ENCODE measurements at regions of chr13 and their contacts with region 1.

Region 1: DNA sequence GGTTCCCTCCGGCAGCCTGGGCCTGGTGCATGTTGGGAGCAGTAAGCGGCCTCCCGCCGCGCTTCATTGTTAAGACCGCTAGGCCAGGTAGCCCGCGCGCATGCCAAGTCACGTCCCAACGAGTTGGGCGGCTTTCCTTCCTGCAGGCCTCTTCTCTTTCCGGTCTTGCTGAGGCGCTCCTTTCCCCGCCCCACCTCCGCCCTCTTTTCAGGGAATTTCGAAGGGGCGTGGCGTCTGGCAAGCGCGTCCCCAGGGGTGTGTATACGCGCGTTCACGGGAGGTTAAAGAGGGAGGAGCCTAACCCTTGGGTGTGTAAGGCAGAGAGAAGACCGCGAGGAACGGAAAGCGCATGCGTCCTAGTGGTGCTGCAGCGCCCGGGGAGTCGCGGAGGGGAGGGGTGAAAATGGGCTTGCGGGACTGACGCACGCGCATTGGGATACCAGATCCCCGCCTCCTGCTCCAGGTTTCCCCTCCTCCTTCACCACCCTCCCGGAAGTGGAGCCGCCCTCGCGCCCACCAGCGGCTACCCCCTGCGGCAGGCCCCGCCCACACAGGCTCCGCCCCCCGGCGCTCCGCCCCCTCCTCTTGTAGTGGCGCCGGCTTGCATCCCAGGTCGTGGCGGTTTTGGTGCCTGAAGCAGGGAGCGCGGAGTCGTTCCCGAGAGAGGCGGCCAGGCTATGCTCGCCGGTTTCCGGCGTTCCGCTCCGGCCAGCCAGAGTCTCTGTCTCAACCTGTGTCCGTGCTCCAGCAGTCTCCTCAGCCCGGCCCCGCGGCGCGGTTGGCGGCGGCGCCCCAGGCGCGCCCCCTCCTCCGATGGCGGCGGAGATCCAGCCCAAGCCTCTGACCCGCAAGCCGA is at the start of gene WDFY2:
- DNase-seq: peak; percentile 99
- H3K4me3 ChIP-seq: peak within 1 kb of the TSS; percentile 77
- H3K27ac ChIP-seq: peak within 1 kb of the TSS; percentile 66
- H3K4me1 ChIP-seq: peaks cover 16% of the 10 kb centered on the region
- CTCF ChIP-seq: peak; percentile 43; the same call in 1 of the 2 replicates
- total RNA-seq, gene WDFY2: 6.4 and 8.2 TPM in 2 replicates

Region 2: GRCh38 chr13:51564252-51564651 is 19.9 kb before region 1 on chr13:
- CTCF ChIA-PET with region 1: no interaction called
- POLR2A ChIA-PET with region 1: no interaction called
- intact Hi-C with region 1: no loop called
- DNase-seq: no peak
- H3K4me3 ChIP-seq: no peak overlapping the region
- H3K27ac ChIP-seq: no peak overlapping the region
- H3K4me1 ChIP-seq: peaks cover 6% of the 10 kb centered on the region
- CTCF ChIP-seq: no peak

Region 3: GRCh38 chr13:51595416-51595815 is 11.3 kb after region 1 on chr13:
- CTCF ChIA-PET with region 1: no interaction called
- POLR2A ChIA-PET with region 1: interaction called, 13 read pairs
- intact Hi-C with region 1: no loop called
- DNase-seq: no peak
- H3K4me3 ChIP-seq: no peak overlapping the region
- H3K27ac ChIP-seq: no peak overlapping the region
- H3K4me1 ChIP-seq: no peaks in the 10 kb centered on the region
- CTCF ChIP-seq: no peak

Region 4: DNA sequence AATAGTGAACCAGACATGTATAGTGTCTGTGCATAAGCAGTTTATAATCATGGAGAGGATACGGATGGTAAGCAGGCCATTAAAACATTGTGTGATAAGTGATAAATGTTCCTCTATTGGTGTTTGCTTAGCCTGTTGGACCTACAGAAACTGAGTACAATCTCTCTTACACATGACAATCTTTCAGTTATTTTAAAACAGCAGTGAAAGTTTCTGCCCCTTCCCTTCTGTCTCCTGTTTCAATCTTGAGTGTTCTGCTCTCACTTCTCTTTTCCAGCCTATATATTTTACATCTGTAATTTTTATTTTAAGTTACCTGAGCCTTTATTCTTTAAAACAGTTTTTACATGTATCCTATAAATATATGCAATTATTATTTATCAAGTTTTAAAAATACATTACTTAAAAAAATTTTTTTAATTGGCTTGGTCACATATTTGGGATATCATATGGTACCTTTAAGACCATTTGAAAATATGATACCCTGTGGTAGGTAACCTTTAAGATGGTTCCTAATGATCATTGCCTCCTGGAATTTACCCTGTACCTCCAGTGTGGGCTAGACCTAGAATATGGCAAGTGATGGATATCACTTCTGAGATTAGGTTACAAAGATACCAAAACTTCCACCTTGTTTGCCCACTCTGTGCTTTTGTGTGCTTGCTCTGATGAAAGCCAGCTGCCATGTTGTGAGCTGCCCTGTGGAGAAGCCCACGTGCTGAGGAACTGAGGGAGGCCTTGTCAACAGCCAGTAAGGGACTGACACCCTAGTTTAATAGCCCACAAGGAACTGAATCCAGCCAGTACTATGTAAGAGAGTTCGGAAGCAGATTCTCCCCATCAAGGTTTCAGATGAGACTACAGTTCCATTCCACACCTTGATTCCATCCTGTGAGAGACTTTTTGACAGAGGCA is 120.6 kb after region 1 on chr13:
- CTCF ChIA-PET with region 1: interaction called, 3 read pairs
- POLR2A ChIA-PET with region 1: no interaction called
- intact Hi-C with region 1: loop called (anchors 2 kb)
- DNase-seq: peak; percentile 53
- H3K4me3 ChIP-seq: peak overlapping the region; percentile 26
- H3K27ac ChIP-seq: peak overlapping the region; percentile 68
- H3K4me1 ChIP-seq: peaks cover 27% of the 10 kb centered on the region
- CTCF ChIP-seq: no peak

Region 5: GRCh38 chr13:51797664-51798488 is 213.8 kb after region 1 on chr13:
- CTCF ChIA-PET with region 1: interaction called, 3 read pairs
- POLR2A ChIA-PET with region 1: interaction called, 3 read pairs
- intact Hi-C with region 1: loop called (anchors 1 kb)
- DNase-seq: peak; percentile 84
- H3K4me3 ChIP-seq: no peak overlapping the region
- H3K27ac ChIP-seq: no peak overlapping the region
- H3K4me1 ChIP-seq: peaks cover 88% of the 10 kb centered on the region
- CTCF ChIP-seq: peak; percentile 82

Region 6: DNA sequence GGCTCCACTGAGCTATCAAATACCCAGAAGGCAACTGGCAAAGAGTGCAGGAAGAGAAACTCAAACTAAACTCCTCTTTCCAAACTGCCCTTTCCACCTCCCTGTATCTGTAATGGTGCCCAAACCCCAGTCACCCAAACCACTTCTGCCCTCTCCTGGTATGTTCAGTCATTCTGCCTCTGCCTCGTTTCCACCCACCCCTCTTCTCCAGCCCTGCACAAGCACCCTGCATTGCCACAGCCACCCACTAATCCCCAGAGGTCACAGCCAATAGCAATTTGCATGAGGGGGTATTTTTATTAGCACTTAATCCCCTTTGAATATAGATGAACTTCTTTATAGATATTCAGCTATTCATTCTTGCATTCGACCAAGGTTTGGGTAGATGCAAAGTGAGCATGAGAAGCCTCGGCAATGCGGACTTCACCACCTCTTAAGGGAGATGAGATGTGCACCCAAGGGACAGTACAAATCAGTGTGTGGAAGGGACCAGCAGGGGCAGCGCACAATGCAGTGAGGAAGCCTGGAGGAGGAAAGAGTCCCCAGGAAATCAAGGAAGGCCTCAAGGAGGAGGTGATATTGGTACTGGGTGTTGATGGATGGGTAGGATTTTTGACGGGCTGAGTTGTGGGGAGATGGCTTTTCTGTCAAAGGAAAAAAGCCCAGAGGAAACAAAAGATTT is 248.5 kb after region 1 on chr13:
- CTCF ChIA-PET with region 1: no interaction called
- POLR2A ChIA-PET with region 1: no interaction called
- intact Hi-C with region 1: loop called (anchors 1 kb)
- DNase-seq: peak; percentile 83
- H3K4me3 ChIP-seq: peak overlapping the region; percentile 41
- H3K27ac ChIP-seq: peak overlapping the region; percentile 95
- H3K4me1 ChIP-seq: peaks cover 76% of the 10 kb centered on the region
- CTCF ChIP-seq: peak; percentile 88

Measured in OCI-LY7 (cell line).